Mucosa of descending colon (tissue), 3 donors: ENCODE measurements at regions of chr15 and their contacts with region 1.

Region 1: DNA sequence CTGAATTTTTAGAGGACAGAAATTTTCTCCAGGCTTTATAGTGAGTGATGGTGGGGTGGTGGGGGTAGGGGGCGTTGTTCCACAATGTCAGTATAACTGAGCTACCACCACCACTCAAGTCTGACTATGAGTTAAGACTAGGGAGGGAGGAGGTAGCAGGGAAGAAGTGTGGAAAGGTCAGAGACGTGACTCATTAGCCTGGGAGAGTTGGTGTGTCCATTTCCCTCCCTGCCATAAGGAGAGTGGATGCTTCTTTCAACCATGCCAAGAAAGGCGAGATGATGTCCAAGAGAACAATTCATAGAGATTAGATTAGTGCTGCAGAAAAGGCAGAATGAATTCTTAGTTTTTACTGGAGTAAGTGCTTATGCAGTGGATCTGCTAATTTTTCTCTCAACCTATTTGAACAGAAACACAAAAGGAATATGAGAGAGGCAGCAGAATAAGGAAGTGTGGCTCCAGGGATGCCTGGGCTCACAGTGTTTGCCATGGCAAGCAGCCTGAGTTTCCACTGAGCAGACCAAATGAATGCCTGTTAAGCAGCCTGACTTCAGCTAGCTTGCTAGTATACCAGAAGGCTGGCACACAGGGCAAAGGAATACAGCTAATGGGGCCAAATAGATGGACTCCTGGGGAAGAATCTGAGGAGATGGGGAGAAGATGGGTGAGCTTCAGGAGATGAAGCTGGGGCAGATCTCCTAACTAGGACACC is 708.9 kb downstream of the NTRK3 start:
- DNase-seq: no peak
- ATAC-seq: no peak
- H3K4me3 ChIP-seq: no peak overlapping the region
- H3K4me1 ChIP-seq: no peaks in the 10 kb centered on the region
- CTCF ChIP-seq: no peak

Region 2: GRCh38 chr15:87439090-87439489 is 108.5 kb before region 1 on chr15:
- intact Hi-C with region 1: loop called in 1 of 2 experiments (anchors 5 kb)
- DNase-seq: no peak
- ATAC-seq: no peak
- H3K4me3 ChIP-seq: no peak overlapping the region
- H3K4me1 ChIP-seq: no peaks in the 10 kb centered on the region
- CTCF ChIP-seq: no peak

Region 3: DNA sequence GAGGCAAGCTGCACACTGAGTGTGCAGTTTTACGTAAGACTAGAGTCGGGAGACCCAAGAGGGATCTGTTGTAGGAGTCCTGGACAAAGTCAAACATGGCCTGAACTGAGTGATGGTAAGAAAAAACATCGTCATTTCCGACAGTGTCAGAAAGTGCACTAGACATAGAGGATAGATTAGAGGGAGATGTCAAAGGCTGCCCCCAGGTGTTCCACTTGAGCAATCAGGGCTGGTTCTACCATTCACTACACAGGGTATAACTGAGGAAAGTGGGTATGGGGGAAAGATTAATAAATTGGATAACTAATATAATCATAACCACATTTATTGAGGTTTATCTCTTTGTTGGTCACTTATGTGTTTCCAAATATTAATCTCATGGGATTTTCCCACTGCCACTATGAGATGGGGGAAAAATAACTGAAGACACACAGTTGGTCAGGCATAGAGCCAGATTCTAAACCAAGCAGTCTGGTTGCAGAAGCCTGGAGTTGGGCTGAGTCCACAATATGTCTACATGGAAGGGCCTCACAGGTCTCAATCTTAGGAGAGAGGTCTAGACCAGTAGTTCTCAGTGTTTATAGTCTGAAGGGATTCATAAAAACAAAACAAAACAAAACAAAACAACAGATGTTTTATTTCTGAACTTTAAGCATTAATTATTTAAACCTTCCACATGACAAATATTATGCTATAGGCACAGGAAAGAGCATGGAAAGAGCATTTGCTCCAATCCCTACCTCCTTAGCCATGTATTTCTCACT is 57.5 kb before region 1 on chr15:
- intact Hi-C with region 1: no loop called
- DNase-seq: no peak
- ATAC-seq: no peak
- H3K4me3 ChIP-seq: no peak overlapping the region
- H3K4me1 ChIP-seq: no peaks in the 10 kb centered on the region
- CTCF ChIP-seq: no peak